PC-3 (cell line): ENCODE measurements at regions of chr17 and their contacts with region 1.

Region 1: GRCh38 chr17:6666077-6666521 is 14.5 kb downstream of the C17orf100 start:
- DNase-seq: peak; percentile 84
- ATAC-seq: peak; percentile 71
- H3K4me3 ChIP-seq: no peak overlapping the region
- H3K27ac ChIP-seq: no peak overlapping the region
- H3K4me1 ChIP-seq: peaks cover 25% of the 10 kb centered on the region
- H3K27me3 ChIP-seq: no peaks in the 10 kb centered on the region
- CTCF ChIP-seq: peak; percentile 90

Region 2: GRCh38 chr17:6721744-6722143 is 55.6 kb after region 1 on chr17:
- CTCF ChIA-PET with region 1: interaction called, 5 read pairs
- POLR2A ChIA-PET with region 1: no interaction called
- intact Hi-C with region 1: loop called (anchors 1 kb)
- DNase-seq: no peak
- ATAC-seq: no peak
- H3K4me3 ChIP-seq: no peak overlapping the region
- H3K27ac ChIP-seq: no peak overlapping the region
- H3K4me1 ChIP-seq: no peaks in the 10 kb centered on the region
- H3K27me3 ChIP-seq: peaks cover 10% of the 10 kb centered on the region; the same call in 1 of the 2 replicates
- CTCF ChIP-seq: no peak

Region 3: DNA sequence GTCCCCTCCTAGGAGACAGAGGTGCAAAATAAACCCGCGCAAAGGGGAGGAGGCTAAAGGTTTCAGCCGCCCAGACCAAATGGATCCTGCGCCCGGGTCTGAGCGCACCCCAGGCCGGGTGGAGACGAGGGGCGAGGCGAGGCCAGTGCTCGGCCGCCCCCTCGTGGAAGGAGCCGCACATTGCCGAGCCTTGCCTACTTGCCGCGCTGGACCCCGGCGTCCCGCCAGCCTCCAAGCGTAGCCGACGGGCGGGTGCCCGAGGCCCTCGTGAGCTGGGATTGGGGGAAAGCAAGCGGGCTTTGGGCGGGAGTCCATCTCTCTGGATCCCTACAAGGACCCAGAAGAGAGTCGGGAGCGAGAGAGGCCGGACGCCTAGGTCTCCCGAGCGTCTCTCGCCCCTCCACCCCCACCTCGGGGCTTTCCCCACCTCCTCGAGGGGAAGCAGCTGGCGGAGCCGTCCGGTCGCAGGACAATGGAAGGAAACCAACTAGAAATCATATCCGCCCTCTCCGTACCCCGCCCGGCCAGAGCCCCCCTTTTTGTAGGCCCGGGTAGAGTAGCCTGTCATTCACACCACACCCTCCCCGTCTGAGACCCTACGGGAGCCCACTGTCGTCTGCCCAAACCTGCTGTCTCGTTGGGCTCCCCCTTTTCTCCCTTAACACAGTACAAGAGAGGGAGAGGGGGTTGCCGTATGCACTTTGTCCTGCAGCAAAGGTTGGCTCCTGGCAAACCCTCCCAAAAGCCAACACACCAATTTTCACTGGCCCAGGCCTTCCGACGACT is 356.1 kb after region 1 on chr17:
- CTCF ChIA-PET with region 1: no interaction called
- POLR2A ChIA-PET with region 1: no interaction called
- intact Hi-C with region 1: loop called (anchors 5 kb)
- DNase-seq: peak; percentile 73
- ATAC-seq: peak; percentile 73
- H3K4me3 ChIP-seq: peak overlapping the region; percentile 54
- H3K27ac ChIP-seq: no peak overlapping the region
- H3K4me1 ChIP-seq: peaks cover 12% of the 10 kb centered on the region; the same call in 1 of the 2 replicates
- H3K27me3 ChIP-seq: no peaks in the 10 kb centered on the region
- CTCF ChIP-seq: peak; percentile 79